ENCODE measurements at regions of chr19 and their contacts with region 1.

Region 1: DNA sequence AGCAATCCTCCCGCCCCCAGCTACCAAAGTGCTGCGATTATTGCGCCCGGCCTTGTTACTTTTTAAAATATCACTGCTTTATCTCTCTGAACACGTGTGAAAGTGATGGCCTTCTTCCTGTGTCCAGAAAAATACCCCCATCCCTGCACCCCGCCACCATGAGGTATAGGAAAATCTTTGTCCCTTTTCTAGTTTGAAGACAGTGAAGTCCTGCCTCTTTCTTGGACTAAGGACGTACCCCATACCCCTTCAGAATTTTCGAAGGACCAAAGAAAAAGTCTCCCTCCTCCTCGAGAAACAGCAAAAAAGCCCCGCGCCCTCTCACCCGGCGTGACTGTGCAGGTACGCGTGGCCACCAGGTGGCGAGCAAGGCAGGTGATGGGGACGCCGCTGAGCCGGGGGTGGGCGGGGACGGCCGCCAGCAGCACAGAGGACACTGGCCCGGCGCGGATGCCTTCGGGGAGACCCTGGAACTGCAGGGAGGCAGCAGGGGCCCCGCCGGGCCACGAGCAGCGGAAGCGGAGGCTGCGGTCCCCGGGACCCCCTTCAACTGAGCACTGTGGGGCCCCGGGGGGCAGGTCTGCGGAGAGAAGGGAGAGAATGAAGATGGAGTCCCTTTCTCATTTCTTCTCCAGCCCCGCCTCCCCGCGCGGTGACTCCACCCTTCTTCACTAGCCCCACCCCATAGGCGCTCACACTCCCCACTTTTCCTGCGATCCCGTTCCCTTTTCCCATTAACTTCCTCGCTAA is 3.2 kb downstream of the VSIG10L start:
- DNase-seq: peak; percentile 87
- H3K4me3 ChIP-seq: peak overlapping the region; percentile 70
- H3K27ac ChIP-seq: no peak overlapping the region
- H3K4me1 ChIP-seq: peaks cover 10% of the 10 kb centered on the region
- CTCF ChIP-seq: peak; percentile 93

Region 2: DNA sequence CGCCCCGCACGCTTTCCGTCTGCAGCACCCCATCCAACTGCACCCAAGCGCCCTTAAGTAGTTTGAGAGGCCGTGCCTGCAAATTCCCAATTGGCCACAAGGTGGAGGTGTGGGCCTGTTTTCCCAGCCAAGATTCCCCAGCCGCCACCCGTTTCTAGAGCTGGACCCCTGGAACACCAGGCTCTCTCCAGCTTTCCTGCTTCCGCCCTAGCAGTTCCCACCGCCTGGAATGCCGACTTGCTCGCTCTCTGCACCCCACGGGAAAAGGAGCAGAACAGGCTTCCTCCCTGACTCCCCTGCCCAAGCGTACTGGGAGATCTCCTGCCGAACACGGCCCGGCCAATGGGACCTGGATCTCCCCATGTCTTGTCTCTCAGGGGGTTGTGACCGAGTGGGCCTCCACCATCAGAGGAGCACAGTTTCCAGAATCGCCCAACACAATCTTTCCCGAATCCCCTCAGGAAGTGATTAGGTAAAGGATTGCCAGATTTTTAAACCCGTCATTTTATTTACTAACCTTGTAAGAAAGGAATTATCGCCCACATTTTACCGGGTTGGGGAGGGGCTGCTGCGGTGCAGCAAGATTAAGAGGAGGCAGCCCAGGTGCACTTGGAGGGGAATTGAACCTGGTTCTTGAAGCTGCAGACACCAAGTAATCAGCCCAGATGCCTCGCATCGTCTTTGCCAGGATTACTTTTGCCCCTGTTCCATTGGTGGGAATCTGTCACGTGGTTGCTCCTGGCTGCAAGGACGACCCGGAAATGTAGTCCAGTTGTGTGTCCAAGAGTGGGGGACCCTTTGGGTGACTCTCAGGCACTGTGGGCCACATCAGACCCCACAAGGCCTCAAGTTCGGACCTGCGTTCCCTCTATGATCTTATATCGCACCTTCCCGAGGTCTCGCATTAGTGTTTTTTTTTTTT is 969.8 kb before region 1 on chr19:
- CTCF ChIA-PET with region 1: no interaction called
- POLR2A ChIA-PET with region 1: no interaction called
- intact Hi-C with region 1: no loop called
- DNase-seq: peak; percentile 92
- H3K4me3 ChIP-seq: peak overlapping the region; percentile 81
- H3K27ac ChIP-seq: peak overlapping the region; percentile 74
- H3K4me1 ChIP-seq: peaks cover 55% of the 10 kb centered on the region
- CTCF ChIP-seq: peak; percentile 92

Region 3: GRCh38 chr19:51367565-51368365 is 29.0 kb after region 1 on chr19:
- CTCF ChIA-PET with region 1: interaction called, 3 read pairs
- POLR2A ChIA-PET with region 1: interaction called, 4 read pairs
- intact Hi-C with region 1: loop called (anchors 1 kb)
- DNase-seq: peak; percentile 98
- H3K4me3 ChIP-seq: peak overlapping the region; percentile 78
- H3K27ac ChIP-seq: peak overlapping the region; percentile 79
- H3K4me1 ChIP-seq: peaks cover 32% of the 10 kb centered on the region
- CTCF ChIP-seq: no peak

Region 4: GRCh38 chr19:51393959-51394836 is 55.5 kb after region 1 on chr19:
- CTCF ChIA-PET with region 1: no interaction called
- POLR2A ChIA-PET with region 1: interaction called, 3 read pairs
- intact Hi-C with region 1: loop called (anchors 1 kb)
- DNase-seq: peak; percentile 100
- H3K4me3 ChIP-seq: peak overlapping the region; percentile 85
- H3K27ac ChIP-seq: peak overlapping the region; percentile 93
- H3K4me1 ChIP-seq: peaks cover 30% of the 10 kb centered on the region
- CTCF ChIP-seq: peak; percentile 30; the same call in 1 of the 2 replicates

Region 5: GRCh38 chr19:51417107-51417809 is 78.5 kb after region 1 on chr19 and contains the start of gene SIGLEC10:
- CTCF ChIA-PET with region 1: interaction called, 4 read pairs
- POLR2A ChIA-PET with region 1: no interaction called
- intact Hi-C with region 1: loop called (anchors 2 kb)
- DNase-seq: peak; percentile 93
- H3K4me3 ChIP-seq: peak within 1 kb of the TSS; percentile 87
- H3K27ac ChIP-seq: peak within 1 kb of the TSS; percentile 81
- H3K4me1 ChIP-seq: peaks cover 24% of the 10 kb centered on the region
- CTCF ChIP-seq: no peak
- total RNA-seq, gene SIGLEC10: 20.7 and 25.2 TPM in 2 replicates

Region 6: GRCh38 chr19:51439021-51439465 is 100.3 kb after region 1 on chr19:
- CTCF ChIA-PET with region 1: no interaction called
- POLR2A ChIA-PET with region 1: no interaction called
- intact Hi-C with region 1: loop called (anchors 2 kb)
- DNase-seq: peak; percentile 58
- H3K4me3 ChIP-seq: no peak overlapping the region
- H3K27ac ChIP-seq: no peak overlapping the region
- H3K4me1 ChIP-seq: peaks cover 18% of the 10 kb centered on the region
- CTCF ChIP-seq: peak; percentile 84

Region 7: GRCh38 chr19:51651216-51651846 is 312.6 kb after region 1 on chr19:
- CTCF ChIA-PET with region 1: no interaction called
- POLR2A ChIA-PET with region 1: no interaction called
- intact Hi-C with region 1: loop called (anchors 10 kb)
- DNase-seq: peak; percentile 48
- H3K4me3 ChIP-seq: no peak overlapping the region
- H3K27ac ChIP-seq: no peak overlapping the region
- H3K4me1 ChIP-seq: peaks cover 23% of the 10 kb centered on the region
- CTCF ChIP-seq: no peak